Right ventricle myocardium inferior (tissue), 1 donor: ENCODE measurements at regions of chr11 and their contacts with region 1.

Region 1: DNA sequence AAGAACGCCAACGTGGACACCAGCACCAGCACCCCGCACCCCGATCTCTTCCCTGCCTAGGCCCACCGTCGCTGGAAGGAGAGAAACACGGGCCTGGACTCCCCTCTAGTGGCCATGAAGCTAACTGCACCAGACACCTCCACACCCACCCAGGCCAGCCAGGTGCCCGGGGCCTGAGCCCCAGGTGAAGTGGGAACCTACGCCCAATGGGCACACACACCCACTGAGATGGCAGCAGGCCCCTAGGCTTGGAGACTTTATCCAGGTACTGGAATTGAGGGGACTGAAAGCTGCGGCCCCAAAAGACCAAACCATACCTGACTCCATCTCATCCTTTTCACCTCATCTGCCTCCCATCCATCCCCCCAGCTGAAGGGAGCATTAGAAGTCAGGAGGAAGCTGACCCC is 81.0 kb downstream of the BUD13 start:
- DNase-seq: peak; percentile 77
- ATAC-seq: peak; percentile 57

Region 2: GRCh38 chr11:116217006-116217405 is 474.8 kb before region 1 on chr11:
- intact Hi-C with region 1: loop called (anchors 2 kb)
- DNase-seq: no peak
- ATAC-seq: no peak

Region 3: GRCh38 chr11:116454020-116454645 is 237.6 kb before region 1 on chr11:
- intact Hi-C with region 1: loop called (anchors 2 kb)
- DNase-seq: no peak
- ATAC-seq: peak; percentile 42